Mucosa of descending colon (tissue), 3 donors: ENCODE measurements at regions of chr5 and their contacts with region 1.

Region 1: DNA sequence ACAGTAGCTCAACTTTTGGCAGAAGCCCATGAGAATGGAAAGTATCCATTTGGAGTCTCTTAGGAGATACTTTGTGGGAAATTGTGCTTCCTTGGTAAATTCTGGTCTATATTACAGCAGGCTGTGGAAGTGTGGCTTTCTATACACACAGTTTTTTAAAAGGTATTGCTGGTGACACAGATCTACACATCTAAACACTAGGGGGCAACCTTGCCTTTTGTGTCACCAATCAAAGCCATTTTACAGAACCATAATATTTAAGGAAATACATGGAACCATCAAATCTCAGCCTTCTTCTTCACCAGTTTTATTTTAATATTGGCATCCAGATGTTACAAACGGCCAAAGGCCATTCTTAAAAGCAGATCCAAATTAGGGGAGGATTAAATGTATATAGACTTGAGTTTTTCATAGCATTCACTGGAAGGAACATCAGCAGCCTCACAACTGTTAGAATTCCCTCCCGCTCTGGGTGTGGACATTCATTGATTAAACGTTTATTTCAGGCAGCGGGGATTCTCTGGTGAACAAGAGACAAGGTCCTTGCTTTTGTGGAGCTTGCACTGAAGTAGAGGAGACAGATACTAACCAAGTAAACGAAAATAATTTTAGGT is 132.4 kb upstream of the EPB41L4A start:
- DNase-seq: peak in 1 of 3 donors; percentile 77
- ATAC-seq: peak; percentile 75
- H3K4me3 ChIP-seq: no peak overlapping the region
- H3K4me1 ChIP-seq: no peaks in the 10 kb centered on the region
- CTCF ChIP-seq: peak; percentile 56

Region 2: GRCh38 chr5:112628219-112628980 is 76.9 kb after region 1 on chr5:
- intact Hi-C with region 1: no loop called
- DNase-seq: no peak
- ATAC-seq: no peak
- H3K4me3 ChIP-seq: no peak overlapping the region
- H3K4me1 ChIP-seq: no peaks in the 10 kb centered on the region
- CTCF ChIP-seq: no peak

Region 3: GRCh38 chr5:112757468-112758208 is 206.1 kb after region 1 on chr5:
- intact Hi-C with region 1: loop called (anchors 2 to 5 kb)
- DNase-seq: peak in 1 of 3 donors; percentile 23
- ATAC-seq: peak; percentile 78
- H3K4me3 ChIP-seq: no peak overlapping the region
- H3K4me1 ChIP-seq: no peaks in the 10 kb centered on the region
- CTCF ChIP-seq: peak; percentile 56

Region 4: GRCh38 chr5:112958093-112959088 is 406.9 kb after region 1 on chr5:
- intact Hi-C with region 1: no loop called
- DNase-seq: peak; percentile 26 to 67 (median 35)
- ATAC-seq: peak; percentile 80
- H3K4me3 ChIP-seq: no peak overlapping the region
- H3K4me1 ChIP-seq: peaks cover 2% of the 10 kb centered on the region
- CTCF ChIP-seq: no peak